Kidney (tissue), 22 donors: ENCODE measurements at regions of chr11 and their contacts with region 1.

Region 1: GRCh38 chr11:11028017-11028692 is 170.3 kb upstream of the ZBED5 start:
- DNase-seq: peak in 4 of 5 donors; percentile 52 to 68 (median 66)
- H3K4me3 ChIP-seq: no peak overlapping the region
- H3K27ac ChIP-seq: no peak overlapping the region
- H3K4me1 ChIP-seq: peaks cover 0 to 2% (median 0%) of the 10 kb centered on the region in 3 donors
- H3K27me3 ChIP-seq: no peaks in the 10 kb centered on the region
- CTCF ChIP-seq: peak; percentile 87

Region 2: DNA sequence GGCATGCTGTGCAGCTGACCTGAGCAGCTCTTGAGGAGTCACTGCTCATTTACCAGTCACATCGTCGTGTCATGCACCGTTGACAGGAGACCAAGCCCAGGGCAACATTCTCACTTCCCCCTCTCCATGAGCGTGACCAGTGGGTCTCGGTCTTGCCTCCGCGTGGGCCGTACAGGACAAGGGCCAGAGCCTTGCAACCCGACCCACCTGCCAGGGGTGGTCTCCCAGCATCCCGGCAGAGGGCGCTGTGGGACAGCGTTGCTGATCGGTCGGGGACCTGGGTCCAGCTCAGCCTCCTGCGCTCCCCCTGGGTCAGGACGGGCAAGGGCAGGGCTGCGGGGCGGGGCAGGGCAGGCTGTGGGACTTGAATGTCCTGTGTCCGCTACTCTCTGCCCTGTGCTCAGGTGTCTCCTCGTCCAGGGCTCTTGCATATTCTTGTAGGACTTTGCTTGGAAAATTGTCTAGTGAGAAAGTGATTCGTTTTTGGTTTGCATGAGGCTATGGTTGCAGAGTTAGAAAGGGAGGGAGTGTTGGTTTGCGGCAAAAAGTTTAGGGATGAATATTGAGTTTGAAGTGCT is 235.7 kb before region 1 on chr11:
- intact Hi-C with region 1: loop called (anchors 10 kb)
- DNase-seq: peak; percentile 86 to 94 (median 90)
- H3K4me3 ChIP-seq: peak overlapping the region in 1 of 3 donors; percentile 41
- H3K27ac ChIP-seq: no peak overlapping the region
- H3K4me1 ChIP-seq: peaks cover 0 to 2% (median 0%) of the 10 kb centered on the region in 3 donors
- H3K27me3 ChIP-seq: no peaks in the 10 kb centered on the region
- CTCF ChIP-seq: peak; percentile 87

Region 3: GRCh38 chr11:11787305-11788062 is 759.3 kb after region 1 on chr11:
- intact Hi-C with region 1: loop called (anchors 5 kb)
- DNase-seq: peak; percentile 75 to 89 (median 77)
- H3K4me3 ChIP-seq: no peak overlapping the region
- H3K27ac ChIP-seq: no peak overlapping the region
- H3K4me1 ChIP-seq: no peaks in the 10 kb centered on the region
- H3K27me3 ChIP-seq: no peaks in the 10 kb centered on the region
- CTCF ChIP-seq: peak; percentile 96